ENCODE measurements at regions of chr2 and their contacts with region 1.

Region 1: DNA sequence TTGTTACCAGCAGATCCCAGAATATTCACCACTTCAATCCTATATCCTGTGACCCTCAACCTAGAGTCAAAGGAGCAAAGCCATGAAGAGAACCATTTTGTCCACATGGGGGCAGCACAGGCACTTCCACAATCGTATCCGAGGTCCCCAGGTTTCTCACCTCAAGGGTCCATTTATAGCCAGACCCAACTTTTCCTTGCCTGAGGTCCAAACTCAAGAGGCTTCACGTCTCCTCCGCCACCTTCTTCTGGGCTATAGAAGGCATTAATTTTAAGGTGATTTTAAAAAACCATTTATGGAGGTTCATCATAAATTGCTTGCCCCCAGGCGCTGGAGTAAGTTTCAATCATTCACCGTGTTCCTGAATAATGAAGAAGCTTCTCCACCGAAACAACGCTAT is 111.6 kb upstream of the NABP1 start:
- DNase-seq: peak; percentile 59
- ATAC-seq: peak; percentile 77
- H3K4me3 ChIP-seq: no peak overlapping the region
- H3K27ac ChIP-seq: no peak overlapping the region
- H3K4me1 ChIP-seq: no peaks in the 10 kb centered on the region
- H3K27me3 ChIP-seq: peaks cover 2% of the 10 kb centered on the region
- CTCF ChIP-seq: peak; percentile 76
- POLR2A ChIP-seq: no peak
- RAD21 ChIP-seq: peak; percentile 84

Region 2: GRCh38 chr2:191453761-191454160 is 112.6 kb before region 1 on chr2:
- CTCF ChIA-PET with region 1: no interaction called
- POLR2A ChIA-PET with region 1: no interaction called
- dilution Hi-C with region 1: no loop called
- in situ Hi-C with region 1: no loop called
- intact Hi-C with region 1: no loop called
- DNase-seq: no peak
- ATAC-seq: no peak
- H3K4me3 ChIP-seq: no peak overlapping the region
- H3K27ac ChIP-seq: no peak overlapping the region
- H3K4me1 ChIP-seq: no peaks in the 10 kb centered on the region
- H3K27me3 ChIP-seq: no peaks in the 10 kb centered on the region
- CTCF ChIP-seq: no peak
- POLR2A ChIP-seq: no peak
- RAD21 ChIP-seq: no peak

Region 3: GRCh38 chr2:191552066-191552465 is 14.3 kb before region 1 on chr2:
- CTCF ChIA-PET with region 1: no interaction called
- POLR2A ChIA-PET with region 1: no interaction called
- dilution Hi-C with region 1: no loop called
- in situ Hi-C with region 1: no loop called
- intact Hi-C with region 1: no loop called
- DNase-seq: no peak
- ATAC-seq: no peak
- H3K4me3 ChIP-seq: no peak overlapping the region
- H3K27ac ChIP-seq: no peak overlapping the region
- H3K4me1 ChIP-seq: no peaks in the 10 kb centered on the region
- H3K27me3 ChIP-seq: peaks cover 3% of the 10 kb centered on the region; the same call in 1 of the 2 replicates
- CTCF ChIP-seq: no peak
- POLR2A ChIP-seq: no peak
- RAD21 ChIP-seq: no peak

Region 4: DNA sequence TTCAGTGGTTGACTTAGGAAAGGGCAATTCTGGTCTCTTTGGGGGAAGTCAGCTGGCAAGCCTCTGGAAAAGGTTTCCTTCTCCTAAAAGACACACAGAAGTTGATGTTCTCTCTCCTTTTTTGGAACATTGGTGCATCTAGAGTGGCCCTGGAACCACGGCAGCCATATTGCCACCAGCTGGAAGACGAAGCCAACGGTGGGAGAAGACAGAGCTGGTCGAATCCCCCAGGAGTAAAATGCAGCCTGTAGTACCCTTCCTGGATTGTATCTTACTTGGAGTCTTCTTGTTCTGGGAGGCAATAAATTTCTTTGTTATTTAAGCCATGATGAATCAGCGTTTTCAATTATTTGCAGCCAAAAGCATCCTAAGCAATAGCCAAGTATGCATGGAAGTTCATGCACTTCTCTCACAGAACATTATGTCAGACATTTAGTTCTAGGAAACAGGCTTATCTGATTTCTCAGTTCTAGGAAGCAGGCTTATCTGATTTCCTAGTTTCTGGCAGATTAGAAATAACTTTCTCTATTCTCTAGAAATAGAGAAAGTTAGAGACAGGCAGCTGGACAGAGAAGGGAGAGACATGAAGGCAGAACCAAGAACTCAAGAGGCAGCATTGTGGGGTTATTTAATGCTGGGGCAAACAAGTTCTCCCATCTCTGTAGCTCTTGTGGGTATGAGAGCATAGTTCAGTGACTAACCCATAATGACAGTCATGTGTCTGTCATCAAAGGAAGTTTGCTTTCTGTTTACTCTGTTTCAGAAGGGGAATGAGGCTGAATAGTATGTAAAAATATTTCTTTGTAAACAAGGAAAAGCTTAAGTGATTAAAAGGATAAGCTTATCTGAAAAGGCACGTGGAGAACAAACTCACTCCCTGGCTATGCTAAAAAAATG is 71.1 kb after region 1 on chr2:
- CTCF ChIA-PET with region 1: interaction called, 4 read pairs
- POLR2A ChIA-PET with region 1: interaction called, 10 read pairs
- dilution Hi-C with region 1: no loop called
- in situ Hi-C with region 1: no loop called
- intact Hi-C with region 1: loop called (anchors 2 kb)
- DNase-seq: peak; percentile 71
- ATAC-seq: peak; percentile 18
- H3K4me3 ChIP-seq: no peak overlapping the region
- H3K27ac ChIP-seq: peak overlapping the region; percentile 100
- H3K4me1 ChIP-seq: peaks cover 21% of the 10 kb centered on the region
- H3K27me3 ChIP-seq: no peaks in the 10 kb centered on the region
- CTCF ChIP-seq: no peak
- POLR2A ChIP-seq: no peak
- RAD21 ChIP-seq: no peak

Region 5: DNA sequence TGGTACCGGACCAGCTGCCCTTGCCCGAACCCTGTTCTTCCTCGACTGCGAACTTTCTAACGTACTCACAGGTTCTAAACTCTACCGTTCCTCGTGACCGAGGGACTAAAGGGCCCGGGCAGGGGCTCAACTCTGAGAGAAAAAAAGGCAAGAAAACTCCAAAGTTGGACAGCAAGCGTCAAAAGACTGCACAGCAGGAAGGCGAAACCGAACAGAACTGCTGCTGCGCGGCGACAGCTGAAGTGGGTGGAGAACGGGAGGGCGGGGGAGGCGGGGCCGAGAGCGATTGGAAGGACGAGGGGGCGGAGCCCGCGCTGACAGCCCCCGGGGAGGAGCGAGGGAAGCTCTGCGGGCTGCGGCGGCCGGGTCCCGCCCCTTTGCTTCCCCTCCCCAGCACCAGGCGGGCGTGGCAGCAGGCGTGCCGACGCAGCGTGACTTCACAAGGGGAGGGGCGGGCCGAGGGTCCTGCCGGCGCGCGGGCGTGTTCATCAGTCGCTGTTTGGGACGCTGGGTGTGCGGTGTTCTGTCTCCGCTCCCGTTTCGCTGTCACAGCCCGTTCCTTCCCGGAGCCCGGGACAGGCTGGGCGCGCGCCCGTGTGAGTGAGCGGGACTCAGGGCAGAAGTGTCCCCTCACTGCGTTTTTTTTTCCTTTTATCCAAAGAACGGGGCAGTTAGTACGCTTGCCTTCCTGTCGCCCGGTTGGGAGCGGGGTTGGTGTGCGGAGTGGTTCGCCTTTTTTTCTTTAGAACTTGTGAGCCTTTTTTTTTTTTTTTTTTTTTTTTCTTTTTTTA is 111.5 kb after region 1 on chr2 and contains the start of gene NABP1:
- CTCF ChIA-PET with region 1: no interaction called
- POLR2A ChIA-PET with region 1: interaction called, 12 read pairs
- dilution Hi-C with region 1: no loop called
- in situ Hi-C with region 1: no loop called
- intact Hi-C with region 1: loop called (anchors 1 kb)
- DNase-seq: peak; percentile 97
- ATAC-seq: peak; percentile 95
- H3K4me3 ChIP-seq: peak within 1 kb of the TSS; percentile 73
- H3K27ac ChIP-seq: peak within 1 kb of the TSS; percentile 89
- H3K4me1 ChIP-seq: peaks cover 5% of the 10 kb centered on the region; the same call in 1 of the 2 replicates
- H3K27me3 ChIP-seq: no peaks in the 10 kb centered on the region
- CTCF ChIP-seq: no peak
- POLR2A ChIP-seq: peak; percentile 100
- RAD21 ChIP-seq: peak; percentile 26
- total RNA-seq, gene NABP1: 57.7 and 141 TPM in 2 replicates

Region 6: DNA sequence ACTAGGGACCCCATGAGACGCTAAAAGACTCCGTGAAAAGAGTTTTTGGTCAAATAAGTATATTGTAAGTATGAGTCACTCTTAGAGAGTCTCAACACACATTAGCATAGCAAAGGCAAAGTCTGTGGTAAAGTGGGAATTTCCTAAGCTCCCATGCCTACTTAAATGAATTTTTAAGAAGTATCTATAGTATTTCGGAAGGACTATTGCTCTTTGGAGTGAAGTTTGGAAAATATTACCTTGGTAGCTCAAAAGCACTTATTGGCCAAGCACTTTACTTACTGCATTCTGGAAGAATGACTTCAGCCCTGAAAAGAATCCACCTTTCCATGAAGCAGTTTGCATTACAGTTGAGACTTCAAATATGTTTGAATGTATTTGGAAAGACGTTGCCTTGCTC is 223.5 kb after region 1 on chr2:
- CTCF ChIA-PET with region 1: no interaction called
- POLR2A ChIA-PET with region 1: no interaction called
- dilution Hi-C with region 1: no loop called
- in situ Hi-C with region 1: no loop called
- intact Hi-C with region 1: loop called (anchors 5 kb)
- DNase-seq: peak; percentile 71
- ATAC-seq: peak; percentile 61
- H3K4me3 ChIP-seq: no peak overlapping the region
- H3K27ac ChIP-seq: no peak overlapping the region
- H3K4me1 ChIP-seq: peaks cover 4% of the 10 kb centered on the region; the same call in 1 of the 2 replicates
- H3K27me3 ChIP-seq: peaks cover 2% of the 10 kb centered on the region; the same call in 1 of the 2 replicates
- CTCF ChIP-seq: no peak
- POLR2A ChIP-seq: no peak
- RAD21 ChIP-seq: no peak

Region 7: GRCh38 chr2:191811807-191812602 is 245.7 kb after region 1 on chr2:
- CTCF ChIA-PET with region 1: interaction called, 4 read pairs
- POLR2A ChIA-PET with region 1: no interaction called
- dilution Hi-C with region 1: no loop called
- in situ Hi-C with region 1: loop called (anchors 10 kb)
- intact Hi-C with region 1: loop called (anchors 2 kb)
- DNase-seq: peak; percentile 69
- ATAC-seq: peak; percentile 97
- H3K4me3 ChIP-seq: no peak overlapping the region
- H3K27ac ChIP-seq: no peak overlapping the region
- H3K4me1 ChIP-seq: no peaks in the 10 kb centered on the region
- H3K27me3 ChIP-seq: no peaks in the 10 kb centered on the region
- CTCF ChIP-seq: peak; percentile 95
- POLR2A ChIP-seq: 0 out of 2 replicates have a peak, but pooled peaks have one; percentile 30
- RAD21 ChIP-seq: peak; percentile 97

Region 8: DNA sequence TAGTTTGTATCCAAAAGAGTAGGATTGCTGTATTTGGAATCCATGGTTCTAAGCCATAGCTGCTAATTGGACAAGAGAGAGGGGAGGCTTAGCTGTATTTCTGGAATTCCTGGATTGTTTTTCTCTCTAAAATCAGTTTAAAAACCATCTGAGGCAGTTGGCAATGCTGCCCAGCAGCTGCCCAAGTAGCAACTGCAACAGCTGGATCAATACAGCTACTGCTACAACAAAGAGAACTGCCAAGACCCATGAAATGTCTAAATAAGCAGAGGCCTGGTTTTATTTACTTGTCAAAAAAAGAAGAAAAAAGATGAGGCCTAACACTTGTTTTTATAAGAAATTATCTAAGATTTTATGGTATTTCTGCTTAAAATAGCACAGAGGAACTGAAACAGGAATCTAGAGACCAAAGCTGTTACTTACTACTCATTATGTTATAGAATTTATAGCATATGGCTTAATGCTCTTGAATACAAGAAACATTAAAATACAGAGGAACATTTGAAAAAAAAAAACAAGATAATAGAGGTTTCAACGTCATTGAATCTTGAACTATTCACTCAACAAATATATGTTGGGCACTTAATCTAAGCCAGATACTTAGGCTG is 589.3 kb after region 1 on chr2:
- CTCF ChIA-PET with region 1: no interaction called
- POLR2A ChIA-PET with region 1: no interaction called
- dilution Hi-C with region 1: no loop called
- in situ Hi-C with region 1: loop called (anchors 5 kb)
- intact Hi-C with region 1: no loop called
- DNase-seq: no peak
- ATAC-seq: no peak
- H3K4me3 ChIP-seq: no peak overlapping the region
- H3K27ac ChIP-seq: no peak overlapping the region
- H3K4me1 ChIP-seq: no peaks in the 10 kb centered on the region
- H3K27me3 ChIP-seq: no peaks in the 10 kb centered on the region
- CTCF ChIP-seq: no peak
- POLR2A ChIP-seq: no peak
- RAD21 ChIP-seq: no peak

Region 9: DNA sequence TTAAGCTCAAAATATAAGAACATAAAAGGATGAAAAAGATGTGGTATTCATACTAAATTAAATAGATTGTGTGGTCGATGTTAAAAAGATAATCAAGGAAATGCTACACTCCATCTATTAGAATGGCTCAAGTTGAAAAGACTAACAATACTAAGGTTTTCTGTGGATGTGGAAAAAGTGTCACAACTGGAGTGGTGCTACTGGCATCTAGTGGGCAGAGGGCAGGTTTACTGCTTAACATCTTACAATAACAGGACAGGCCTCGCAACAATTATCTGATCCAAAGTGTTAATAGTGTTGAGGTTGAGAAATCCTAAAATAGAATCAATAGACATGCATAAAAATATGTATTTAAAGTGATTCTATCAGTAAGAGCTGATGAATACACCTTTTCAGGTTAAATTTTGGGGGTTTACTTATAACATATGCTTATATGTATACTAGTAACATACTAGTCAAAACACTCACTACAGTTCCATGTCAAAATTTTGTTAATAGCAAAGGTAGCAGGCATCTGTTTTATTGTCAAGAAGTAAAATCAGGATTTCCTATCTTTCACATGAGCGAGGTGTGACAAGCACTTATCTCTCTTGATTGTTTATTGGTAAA is 719.9 kb after region 1 on chr2:
- CTCF ChIA-PET with region 1: no interaction called
- POLR2A ChIA-PET with region 1: no interaction called
- dilution Hi-C with region 1: no loop called
- in situ Hi-C with region 1: no loop called
- intact Hi-C with region 1: loop called (anchors 2 kb)
- DNase-seq: peak; percentile 63
- ATAC-seq: peak; percentile 86
- H3K4me3 ChIP-seq: no peak overlapping the region
- H3K27ac ChIP-seq: no peak overlapping the region
- H3K4me1 ChIP-seq: no peaks in the 10 kb centered on the region
- H3K27me3 ChIP-seq: no peaks in the 10 kb centered on the region; the same call in 1 of the 2 replicates
- CTCF ChIP-seq: peak; percentile 76
- POLR2A ChIP-seq: no peak
- RAD21 ChIP-seq: peak; percentile 86

Measured in IMR-90 (cell line).